Activated CD4-positive, alpha-beta memory T cell treated with anti-CD3 and anti-CD28 coated beads, Interleukin-2, amount 10 ng/mL, durations not matched to agents 7 days and 5 days (primary cell): ENCODE measurements at regions of chr1 and their contacts with region 1.

Region 1: DNA sequence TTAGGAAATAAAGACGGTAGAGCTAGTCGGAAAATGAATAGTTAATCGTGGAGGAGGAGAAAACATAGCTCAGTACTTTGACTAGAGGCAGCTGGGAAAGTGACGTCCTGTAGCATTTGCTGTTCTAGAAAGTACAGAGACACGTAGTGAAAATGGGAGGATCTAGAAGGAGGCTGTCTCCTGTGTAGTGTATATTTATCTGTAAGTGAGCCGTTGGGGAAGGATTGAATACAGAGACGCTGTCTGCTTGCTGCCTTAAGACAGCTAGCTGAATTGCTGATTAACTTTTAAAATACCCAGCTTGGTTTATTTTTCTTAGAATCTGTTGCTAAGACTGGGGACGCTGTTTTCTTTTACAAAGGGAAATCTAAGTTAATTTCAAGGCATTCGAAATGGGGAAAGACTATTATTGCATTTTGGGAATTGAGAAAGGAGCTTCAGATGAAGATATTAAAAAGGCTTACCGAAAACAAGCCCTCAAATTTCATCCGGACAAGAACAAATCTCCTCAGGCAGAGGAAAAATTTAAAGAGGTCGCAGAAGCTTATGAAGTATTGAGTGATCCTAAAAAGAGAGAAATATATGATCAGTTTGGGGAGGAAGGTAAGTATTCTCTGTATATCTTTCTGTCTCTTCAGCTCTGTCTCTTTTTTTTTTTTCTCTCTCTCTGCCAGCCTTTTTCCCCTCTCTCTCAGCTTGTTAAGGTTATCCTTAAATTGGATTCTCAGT is at the start of gene DNAJB4:
- DNase-seq: peak; percentile 72
- H3K4me3 Mint-ChIP-seq: peak within 1 kb of the TSS; percentile 88
- H3K27ac Mint-ChIP-seq: peak within 1 kb of the TSS; percentile 92
- H3K4me1 Mint-ChIP-seq: peaks cover 38% of the 10 kb centered on the region
- H3K27me3 Mint-ChIP-seq: peaks cover 2% of the 10 kb centered on the region
- total RNA-seq, gene DNAJB4: 12.9 to 16.2 TPM

Region 2: GRCh38 chr1:77759071-77760028 is 245.5 kb before region 1 on chr1 and contains the start of gene USP33:
- CTCF ChIA-PET with region 1: interaction called, 4 read pairs
- POLR2A ChIA-PET with region 1: interaction called, 18 read pairs
- DNase-seq: peak; percentile 90
- H3K4me3 Mint-ChIP-seq: peak within 1 kb of the TSS; percentile 94
- H3K27ac Mint-ChIP-seq: peak within 1 kb of the TSS; percentile 91
- H3K4me1 Mint-ChIP-seq: peaks cover 31% of the 10 kb centered on the region
- H3K27me3 Mint-ChIP-seq: peaks cover 2% of the 10 kb centered on the region
- total RNA-seq, gene USP33: 50.5 to 56.7 TPM

Region 3: GRCh38 chr1:77978969-77979876 is 25.7 kb before region 1 on chr1 and contains the start of gene FUBP1:
- CTCF ChIA-PET with region 1: interaction called, 27 read pairs
- POLR2A ChIA-PET with region 1: interaction called, 671 read pairs
- DNase-seq: peak; percentile 97
- H3K4me3 Mint-ChIP-seq: no peak within 1 kb of the TSS
- H3K27ac Mint-ChIP-seq: no peak within 1 kb of the TSS
- H3K4me1 Mint-ChIP-seq: peaks cover 43% of the 10 kb centered on the region
- H3K27me3 Mint-ChIP-seq: no peaks in the 10 kb centered on the region
- total RNA-seq, gene FUBP1: 182 to 185 TPM

Region 4: DNA sequence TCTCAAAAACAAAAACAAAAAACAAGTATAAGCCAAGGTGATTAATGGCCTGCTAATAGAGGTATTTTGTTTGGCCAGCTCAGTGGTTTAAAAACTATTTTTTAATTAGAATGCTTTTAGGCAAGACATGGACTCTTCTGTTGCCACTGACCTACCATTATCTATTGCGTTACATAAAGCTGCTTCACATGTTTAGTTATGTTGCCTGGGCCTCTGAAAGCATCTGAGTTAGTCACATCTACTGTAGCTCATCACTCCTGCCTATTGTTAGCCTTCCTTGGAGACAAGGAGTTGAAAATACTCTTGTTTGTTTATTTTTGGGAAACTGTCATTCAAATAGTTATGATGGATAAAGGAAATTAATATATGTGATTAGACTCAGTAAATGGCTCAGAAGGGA is 14.1 kb after region 1 on chr1:
- CTCF ChIA-PET with region 1: no interaction called
- POLR2A ChIA-PET with region 1: interaction called, 17 read pairs
- DNase-seq: no peak
- H3K4me3 Mint-ChIP-seq: no peak overlapping the region
- H3K27ac Mint-ChIP-seq: no peak overlapping the region
- H3K4me1 Mint-ChIP-seq: no peaks in the 10 kb centered on the region
- H3K27me3 Mint-ChIP-seq: no peaks in the 10 kb centered on the region

Region 5: GRCh38 chr1:78045926-78046778 is 41.3 kb after region 1 on chr1 and contains the start of gene GIPC2:
- CTCF ChIA-PET with region 1: no interaction called
- POLR2A ChIA-PET with region 1: interaction called, 18 read pairs
- DNase-seq: no peak
- H3K4me3 Mint-ChIP-seq: peak within 1 kb of the TSS; percentile 70
- H3K27ac Mint-ChIP-seq: no peak within 1 kb of the TSS
- H3K4me1 Mint-ChIP-seq: peaks cover 22% of the 10 kb centered on the region
- H3K27me3 Mint-ChIP-seq: peaks cover 42% of the 10 kb centered on the region
- total RNA-seq, gene GIPC2: 0.10 to 0.15 TPM

Region 6: GRCh38 chr1:78070758-78071157 is 65.9 kb after region 1 on chr1:
- CTCF ChIA-PET with region 1: no interaction called
- POLR2A ChIA-PET with region 1: no interaction called
- DNase-seq: no peak
- H3K4me3 Mint-ChIP-seq: no peak overlapping the region
- H3K27ac Mint-ChIP-seq: no peak overlapping the region
- H3K4me1 Mint-ChIP-seq: peaks cover 2% of the 10 kb centered on the region
- H3K27me3 Mint-ChIP-seq: peaks cover 10% of the 10 kb centered on the region

Region 7: DNA sequence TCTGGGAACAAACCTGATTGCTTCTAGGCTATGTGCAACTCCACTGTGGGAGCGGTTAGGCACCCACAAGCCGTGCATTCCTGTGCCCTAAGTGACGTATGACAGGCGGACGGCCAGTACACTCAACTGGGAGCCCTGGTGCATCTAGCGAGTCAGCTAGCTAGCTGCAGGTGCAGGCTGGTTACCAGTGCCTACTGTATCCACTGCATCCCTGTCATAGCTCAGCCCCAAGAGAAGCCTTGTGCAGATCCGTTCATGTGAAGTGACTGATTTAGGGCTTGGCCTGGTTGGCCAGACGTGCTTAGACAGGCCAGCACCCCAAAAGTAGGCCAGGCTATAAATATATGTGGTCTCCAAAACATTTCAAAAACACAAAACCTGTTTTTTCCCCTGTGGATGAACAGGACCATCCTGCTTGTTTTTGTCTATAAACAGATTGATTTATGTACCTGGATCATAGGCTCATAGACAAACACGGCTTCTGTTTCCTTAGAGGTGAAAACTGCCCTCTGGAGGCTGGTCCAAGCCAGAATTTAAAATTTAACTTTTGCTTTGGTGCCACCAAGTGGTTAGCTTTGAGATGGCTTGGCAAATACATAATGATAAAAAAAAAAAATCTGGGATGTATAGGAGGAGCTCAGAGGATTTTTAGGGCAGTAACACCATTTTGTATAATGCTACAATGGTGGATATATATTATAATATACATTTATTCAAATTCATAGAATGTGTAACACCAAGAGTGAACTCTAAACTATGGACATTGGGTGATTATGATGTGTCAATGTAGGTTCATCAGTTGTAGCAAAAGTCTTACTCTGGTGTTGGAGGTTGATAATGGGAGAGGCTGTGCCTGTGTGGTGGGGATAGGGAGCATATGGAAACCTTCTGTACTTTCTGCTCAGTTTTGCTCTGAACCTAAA is 109.4 kb after region 1 on chr1:
- CTCF ChIA-PET with region 1: interaction called, 14 read pairs
- POLR2A ChIA-PET with region 1: interaction called, 21 read pairs
- DNase-seq: peak; percentile 63
- H3K4me3 Mint-ChIP-seq: no peak overlapping the region
- H3K27ac Mint-ChIP-seq: no peak overlapping the region
- H3K4me1 Mint-ChIP-seq: peaks cover 6% of the 10 kb centered on the region
- H3K27me3 Mint-ChIP-seq: no peaks in the 10 kb centered on the region